CD4-positive, alpha-beta memory T cell (primary cell): ENCODE measurements at regions of chr14 and their contacts with region 1.

Region 1: DNA sequence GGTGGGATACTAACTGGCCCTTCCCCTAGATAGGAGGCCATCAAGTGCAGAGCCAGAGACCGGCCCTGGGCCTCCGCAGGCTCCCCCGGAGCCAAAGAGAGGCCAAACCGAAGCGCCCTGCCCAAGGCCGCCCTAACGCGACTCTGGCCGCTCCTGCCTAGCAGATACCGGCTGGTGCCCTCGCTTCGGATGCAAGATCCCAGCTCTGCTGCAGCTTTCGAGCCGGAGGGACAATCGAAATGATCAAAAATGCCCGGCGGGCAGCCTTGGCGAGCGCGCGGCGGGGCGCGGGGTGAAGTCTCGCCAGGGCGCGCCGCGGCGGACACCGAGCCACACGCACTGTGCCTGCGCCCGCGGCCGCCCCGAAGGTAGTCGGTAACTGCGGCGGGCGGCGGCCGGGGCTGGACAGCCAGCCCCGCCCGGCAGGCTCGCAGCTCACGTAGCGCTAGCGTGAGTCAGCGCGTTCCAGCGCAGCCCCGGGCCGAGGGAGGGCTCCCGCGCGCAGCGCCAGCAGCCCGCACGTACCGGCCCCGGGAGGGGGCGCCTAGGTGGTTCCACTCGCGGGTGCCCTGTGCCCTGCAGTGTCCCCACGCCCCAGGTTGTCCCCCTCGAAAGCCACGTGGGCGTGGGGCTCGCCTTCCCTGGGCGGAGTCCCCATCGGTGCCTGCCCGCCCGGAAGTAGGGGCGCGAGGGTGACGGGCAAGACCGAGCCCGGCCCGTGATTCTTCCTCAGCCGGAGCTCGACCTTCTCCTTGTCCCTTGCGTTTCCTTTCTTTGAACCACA is 109.2 kb upstream of the EGLN3 start:
- DNase-seq: peak; percentile 36 to 54 (median 46)
- H3K4me3 ChIP-seq: peak overlapping the region; percentile 17 to 47
- H3K4me3 Mint-ChIP-seq: peak overlapping the region; percentile 87 to 93 (median 88)
- H3K27ac ChIP-seq: no peak overlapping the region
- H3K27ac Mint-ChIP-seq: peak overlapping the region; percentile 46 to 91 (median 84)
- H3K4me1 ChIP-seq: peaks cover 8% of the 10 kb centered on the region
- H3K4me1 Mint-ChIP-seq: peaks cover 2 to 28% (median 7%) of the 10 kb centered on the region in 4 donors
- H3K27me3 ChIP-seq: no peaks in the 10 kb centered on the region
- H3K27me3 Mint-ChIP-seq: peaks cover 0 to 1% of the 10 kb centered on the region in 2 donors

Region 2: GRCh38 chr14:34018564-34019244 is 41.3 kb before region 1 on chr14:
- CTCF ChIA-PET with region 1: interaction called, 5 read pairs
- POLR2A ChIA-PET with region 1: interaction called, 13 read pairs
- intact Hi-C with region 1: no loop called
- DNase-seq: peak in 3 of 5 donors; percentile 35 to 43 (median 38)
- H3K4me3 ChIP-seq: peak overlapping the region; percentile 9 to 34
- H3K4me3 Mint-ChIP-seq: peak overlapping the region; percentile 79 to 99 (median 90)
- H3K27ac ChIP-seq: peak overlapping the region; percentile 46
- H3K27ac Mint-ChIP-seq: peak overlapping the region; percentile 51 to 98 (median 94)
- H3K4me1 ChIP-seq: peaks cover 9% of the 10 kb centered on the region
- H3K4me1 Mint-ChIP-seq: peaks cover 5 to 37% (median 11%) of the 10 kb centered on the region in 4 donors
- H3K27me3 ChIP-seq: no peaks in the 10 kb centered on the region
- H3K27me3 Mint-ChIP-seq: no peaks in the 10 kb centered on the region